GM12878 (cell line): ENCODE measurements at regions of chr18 and their contacts with region 1.

Region 1: GRCh38 chr18:25896178-25896780 is 194.1 kb downstream of the SS18 start:
- DNase-seq: no peak
- ATAC-seq: peak; percentile 87
- H3K4me3 ChIP-seq: no peak overlapping the region
- H3K27ac ChIP-seq: no peak overlapping the region
- H3K4me1 ChIP-seq: 0 out of 2 replicates have a peak, but pooled peaks cover 3% of the 10 kb centered on the region
- H3K27me3 ChIP-seq: no peaks in the 10 kb centered on the region; a peak in 1 of 4 replicates
- CTCF ChIP-seq: peak; percentile 69 to 78 (median 76)
- EP300 ChIP-seq: no peak
- POLR2A ChIP-seq: no peak
- RAD21 ChIP-seq: peak; percentile 75

Region 2: DNA sequence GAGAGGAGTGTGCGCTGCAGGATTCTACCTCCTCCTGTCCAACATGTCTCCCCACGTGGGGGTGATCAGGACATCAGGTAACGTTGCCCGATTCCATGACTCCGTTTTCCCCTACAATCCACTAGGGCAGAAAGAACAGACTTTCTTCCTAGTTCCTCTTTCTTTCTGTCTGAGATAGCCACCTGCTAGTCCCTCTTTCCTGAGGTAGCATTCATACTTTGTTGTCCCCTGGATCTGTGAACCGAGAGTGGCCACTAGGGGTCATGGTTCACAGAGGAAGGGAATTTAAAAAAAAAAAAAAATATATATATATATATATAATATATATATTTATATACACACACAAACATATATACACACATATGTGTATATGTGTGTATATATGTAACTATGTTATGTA is 334.4 kb before region 1 on chr18:
- CTCF ChIA-PET with region 1: no interaction called
- POLR2A ChIA-PET with region 1: no interaction called
- RAD21 ChIA-PET with region 1: no interaction called
- SMC1A ChIA-PET with region 1: no interaction called
- in situ Hi-C with region 1: no loop called
- intact Hi-C with region 1: loop called (anchors 5 kb)
- DNase-seq: no peak
- ATAC-seq: peak; percentile 53
- H3K4me3 ChIP-seq: no peak overlapping the region
- H3K27ac ChIP-seq: no peak overlapping the region
- H3K4me1 ChIP-seq: no peaks in the 10 kb centered on the region
- H3K27me3 ChIP-seq: no peaks in the 10 kb centered on the region; a peak in 1 of 4 replicates
- CTCF ChIP-seq: peak in 1 of 3 experiments; percentile 17; a peak in 1 of 6 replicates
- EP300 ChIP-seq: no peak
- POLR2A ChIP-seq: no peak
- RAD21 ChIP-seq: peak; percentile 43